ENCODE measurements at regions of chr21 and their contacts with region 1.

Region 1: DNA sequence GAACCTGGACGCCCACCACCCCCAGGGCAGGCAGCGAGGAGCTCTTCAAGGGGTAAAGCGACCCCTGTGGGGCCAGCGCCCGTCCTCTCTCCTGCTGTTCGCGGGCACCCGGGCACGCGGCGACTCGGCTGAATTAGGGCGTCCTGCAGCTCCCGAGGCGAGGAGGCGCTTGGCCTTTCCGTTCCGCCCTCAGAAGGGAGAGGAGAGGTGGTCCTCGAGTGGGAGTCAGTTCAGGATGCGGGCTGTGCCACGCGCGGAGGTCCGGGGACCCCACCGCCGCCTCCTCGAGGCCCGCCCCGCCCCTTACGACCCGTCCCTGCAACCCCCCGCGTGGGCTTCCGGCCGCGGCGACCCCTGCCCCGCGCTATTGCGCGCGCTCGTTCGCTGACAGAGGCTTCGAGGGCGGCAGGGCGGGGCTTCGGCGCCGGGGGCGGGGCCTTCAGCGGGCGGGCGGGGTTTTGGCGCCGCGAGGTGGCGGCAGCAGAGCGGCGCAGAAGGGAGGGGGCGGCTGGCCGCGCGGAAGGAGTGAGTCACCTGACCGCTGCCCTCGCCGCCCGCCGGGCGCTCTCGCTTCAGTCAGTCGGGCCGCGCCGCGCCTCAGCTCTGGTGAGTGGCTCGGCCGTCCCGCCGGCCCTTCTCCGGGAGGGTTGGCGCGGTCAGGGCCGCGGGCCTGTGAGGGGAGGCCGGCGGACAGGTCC is at the start of gene BACH1:
- DNase-seq: peak; percentile 98
- H3K4me3 ChIP-seq: peak within 1 kb of the TSS; percentile 60 to 86 (median 68)
- H3K27ac ChIP-seq: peak within 1 kb of the TSS; percentile 92 to 100 (median 97)
- H3K4me1 ChIP-seq: peaks cover 24 to 79% (median 49%) of the 10 kb centered on the region in 6 donors
- H3K27me3 ChIP-seq: no peaks in the 10 kb centered on the region
- CTCF ChIP-seq: peak in 10 of 11 experiments; percentile 18 to 88 (median 64)
- POLR2A ChIP-seq: peak in 2 of 3 donors; percentile 89
- total RNA-seq, gene BACH1: 60.5 to 131 (median 102) TPM

Region 2: GRCh38 chr21:28687571-28687970 is 610.9 kb before region 1 on chr21:
- intact Hi-C with region 1: no loop called
- DNase-seq: no peak
- H3K4me3 ChIP-seq: no peak overlapping the region
- H3K27ac ChIP-seq: no peak overlapping the region
- H3K4me1 ChIP-seq: no peaks in the 10 kb centered on the region
- H3K27me3 ChIP-seq: no peaks in the 10 kb centered on the region
- CTCF ChIP-seq: no peak
- POLR2A ChIP-seq: no peak

Region 3: GRCh38 chr21:29080454-29080941 is 218.0 kb before region 1 on chr21:
- intact Hi-C with region 1: loop called (anchors 10 kb)
- DNase-seq: peak; percentile 76
- H3K4me3 ChIP-seq: no peak overlapping the region
- H3K27ac ChIP-seq: peak overlapping the region; percentile 59 to 94 (median 80)
- H3K4me1 ChIP-seq: peaks cover 8 to 56% (median 34%) of the 10 kb centered on the region in 6 donors
- H3K27me3 ChIP-seq: no peaks in the 10 kb centered on the region
- CTCF ChIP-seq: peak in 1 of 11 experiments; percentile 9
- POLR2A ChIP-seq: no peak

Region 4: GRCh38 chr21:29175408-29176134 is 122.9 kb before region 1 on chr21:
- intact Hi-C with region 1: loop called (anchors 10 kb)
- DNase-seq: no peak
- H3K4me3 ChIP-seq: no peak overlapping the region
- H3K27ac ChIP-seq: peak overlapping the region in 1 of 8 donors; percentile 42
- H3K4me1 ChIP-seq: peaks cover 0 to 33% (median 14%) of the 10 kb centered on the region in 6 donors
- H3K27me3 ChIP-seq: no peaks in the 10 kb centered on the region
- CTCF ChIP-seq: no peak
- POLR2A ChIP-seq: no peak

Measured in spleen (tissue), 13 donors.